ENCODE measurements at regions of chr1 and their contacts with region 1.

Region 1: GRCh38 chr1:206030714-206031113 is 7.0 kb upstream of the CTSE start:
- DNase-seq: peak; percentile 79
- ATAC-seq: peak; percentile 98
- H3K4me3 Mint-ChIP-seq: no peak overlapping the region
- H3K27ac Mint-ChIP-seq: no peak overlapping the region
- H3K4me1 Mint-ChIP-seq: peaks cover 7% of the 10 kb centered on the region
- H3K27me3 Mint-ChIP-seq: peaks cover 39% of the 10 kb centered on the region

Region 2: GRCh38 chr1:206014601-206015000 is 16.1 kb before region 1 on chr1:
- CTCF ChIA-PET with region 1: interaction called, 20 read pairs
- POLR2A ChIA-PET with region 1: no interaction called
- DNase-seq: no peak
- ATAC-seq: no peak
- H3K4me3 Mint-ChIP-seq: no peak overlapping the region
- H3K27ac Mint-ChIP-seq: no peak overlapping the region
- H3K4me1 Mint-ChIP-seq: peaks cover 30% of the 10 kb centered on the region
- H3K27me3 Mint-ChIP-seq: peaks cover 16% of the 10 kb centered on the region

Region 3: DNA sequence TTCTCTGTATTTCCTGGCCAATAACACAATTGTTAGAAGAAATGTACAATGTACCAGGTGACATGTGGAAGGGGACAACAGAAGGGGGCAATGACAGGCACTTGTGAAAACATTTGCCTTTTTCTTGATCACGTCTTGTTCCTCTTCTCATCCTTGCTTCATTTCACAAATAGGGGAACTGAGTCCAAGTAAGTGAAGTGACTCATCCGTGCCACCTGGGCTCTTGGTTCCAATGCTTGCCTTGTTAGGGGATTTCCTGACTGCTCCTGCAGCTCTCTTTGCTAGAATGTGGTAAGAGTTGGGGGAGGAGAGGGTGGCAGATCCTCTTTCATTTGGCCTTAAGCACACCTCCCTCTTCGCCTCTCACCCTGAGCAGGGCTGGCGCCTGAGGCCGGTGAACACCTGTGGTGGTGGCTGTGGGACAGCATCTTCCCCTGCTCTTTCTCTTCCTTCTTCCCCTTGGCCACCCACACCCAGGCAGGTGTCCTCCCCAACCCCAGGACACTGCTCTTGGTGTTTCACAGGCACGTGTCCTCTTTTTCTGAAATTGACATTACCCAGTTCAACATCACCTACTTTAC is 20.0 kb after region 1 on chr1:
- CTCF ChIA-PET with region 1: interaction called, 29 read pairs
- POLR2A ChIA-PET with region 1: no interaction called
- DNase-seq: peak; percentile 46
- ATAC-seq: peak; percentile 91
- H3K4me3 Mint-ChIP-seq: no peak overlapping the region
- H3K27ac Mint-ChIP-seq: peak overlapping the region; percentile 60
- H3K4me1 Mint-ChIP-seq: peaks cover 32% of the 10 kb centered on the region
- H3K27me3 Mint-ChIP-seq: peaks cover 12% of the 10 kb centered on the region

Region 4: DNA sequence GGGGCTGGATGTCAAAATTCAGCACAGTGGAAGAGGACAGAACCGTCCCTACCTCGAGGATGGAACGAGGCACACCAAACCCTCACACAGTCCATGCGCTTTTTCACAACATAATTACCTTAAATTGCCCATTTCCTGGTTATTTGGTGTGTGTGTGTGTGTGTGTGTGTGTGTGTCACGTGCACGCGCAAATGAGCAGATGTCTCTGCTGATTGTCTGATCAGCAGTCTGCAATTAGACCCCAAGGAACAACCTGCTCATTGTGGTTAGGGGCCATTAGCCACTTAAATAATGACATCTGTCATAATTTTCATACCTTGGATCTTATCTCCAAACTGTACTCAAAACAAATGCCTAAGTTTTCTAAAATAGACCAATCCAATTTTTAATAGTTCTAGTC is 63.3 kb after region 1 on chr1:
- CTCF ChIA-PET with region 1: interaction called, 17 read pairs
- POLR2A ChIA-PET with region 1: no interaction called
- DNase-seq: no peak
- ATAC-seq: no peak
- H3K4me3 Mint-ChIP-seq: no peak overlapping the region
- H3K27ac Mint-ChIP-seq: no peak overlapping the region
- H3K4me1 Mint-ChIP-seq: no peaks in the 10 kb centered on the region
- H3K27me3 Mint-ChIP-seq: peaks cover 28% of the 10 kb centered on the region